ENCODE measurements at regions of chr1 and their contacts with region 1.

Region 1: GRCh38 chr1:67766141-67766978 is 66.9 kb downstream of the GNG12 start:
- DNase-seq: peak; percentile 51
- ATAC-seq: peak; percentile 33
- H3K4me3 Mint-ChIP-seq: no peak overlapping the region
- H3K27ac Mint-ChIP-seq: no peak overlapping the region
- H3K4me1 Mint-ChIP-seq: peaks cover 8% of the 10 kb centered on the region
- H3K27me3 Mint-ChIP-seq: peaks cover 49% of the 10 kb centered on the region

Region 2: GRCh38 chr1:67561704-67562113 is 204.7 kb before region 1 on chr1:
- CTCF ChIA-PET with region 1: interaction called, 84 read pairs
- DNase-seq: peak; percentile 87
- ATAC-seq: peak; percentile 90
- H3K4me3 Mint-ChIP-seq: no peak overlapping the region
- H3K27ac Mint-ChIP-seq: no peak overlapping the region
- H3K4me1 Mint-ChIP-seq: peaks cover 4% of the 10 kb centered on the region
- H3K27me3 Mint-ChIP-seq: peaks cover 5% of the 10 kb centered on the region

Region 3: GRCh38 chr1:67753776-67754525 is 12.4 kb before region 1 on chr1:
- CTCF ChIA-PET with region 1: interaction called, 10 read pairs
- DNase-seq: no peak
- ATAC-seq: peak; percentile 47
- H3K4me3 Mint-ChIP-seq: no peak overlapping the region
- H3K27ac Mint-ChIP-seq: no peak overlapping the region
- H3K4me1 Mint-ChIP-seq: peaks cover 17% of the 10 kb centered on the region
- H3K27me3 Mint-ChIP-seq: peaks cover 8% of the 10 kb centered on the region

Region 4: DNA sequence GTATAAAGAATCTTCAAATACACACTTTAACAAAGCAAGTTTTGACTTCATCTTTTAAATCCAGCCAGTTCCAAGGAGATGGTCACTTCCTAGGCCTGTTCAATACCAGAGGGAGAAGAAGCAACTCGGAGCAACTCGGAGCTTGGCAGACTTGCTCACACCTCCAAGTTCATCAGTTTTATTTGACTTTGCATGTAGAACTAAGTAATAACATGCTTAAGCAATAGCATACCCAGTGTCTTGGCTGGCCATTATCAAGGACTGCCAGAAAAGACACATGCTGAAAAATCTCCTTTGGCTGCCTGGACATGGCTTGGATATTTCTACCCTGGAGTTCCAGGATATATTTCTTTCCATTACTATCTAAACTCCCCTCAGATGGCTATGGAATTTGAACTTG is 14.3 kb after region 1 on chr1:
- CTCF ChIA-PET with region 1: no interaction called
- DNase-seq: no peak
- ATAC-seq: no peak
- H3K4me3 Mint-ChIP-seq: no peak overlapping the region
- H3K27ac Mint-ChIP-seq: no peak overlapping the region
- H3K4me1 Mint-ChIP-seq: no peaks in the 10 kb centered on the region
- H3K27me3 Mint-ChIP-seq: peaks cover 4% of the 10 kb centered on the region

Region 5: GRCh38 chr1:68213843-68214242 is 447.5 kb after region 1 on chr1:
- CTCF ChIA-PET with region 1: no interaction called
- DNase-seq: no peak
- ATAC-seq: no peak
- H3K4me3 Mint-ChIP-seq: no peak overlapping the region
- H3K27ac Mint-ChIP-seq: no peak overlapping the region
- H3K4me1 Mint-ChIP-seq: no peaks in the 10 kb centered on the region
- H3K27me3 Mint-ChIP-seq: no peaks in the 10 kb centered on the region